RWPE1 (cell line): ENCODE measurements at regions of chr7 and their contacts with region 1.

Region 1: GRCh38 chr7:27774717-27775328 is 34.9 kb downstream of the TAX1BP1 start:
- DNase-seq: peak; percentile 19
- H3K27ac ChIP-seq: no peak overlapping the region
- CTCF ChIP-seq: peak; percentile 94

Region 2: GRCh38 chr7:27196287-27196767 is 578.5 kb before region 1 on chr7:
- CTCF ChIA-PET with region 1: interaction called, 10 read pairs
- POLR2A ChIA-PET with region 1: no interaction called
- DNase-seq: no peak
- H3K27ac ChIP-seq: no peak overlapping the region
- CTCF ChIP-seq: peak; percentile 85

Region 3: GRCh38 chr7:27739909-27740448 is 34.8 kb before region 1 on chr7 and contains the start of gene TAX1BP1:
- CTCF ChIA-PET with region 1: interaction called, 16 read pairs
- POLR2A ChIA-PET with region 1: interaction called, 4 read pairs
- DNase-seq: peak; percentile 95
- H3K27ac ChIP-seq: peak within 1 kb of the TSS; percentile 93
- CTCF ChIP-seq: no peak

Region 4: GRCh38 chr7:27745064-27745583 is 29.7 kb before region 1 on chr7:
- CTCF ChIA-PET with region 1: interaction called, 16 read pairs
- POLR2A ChIA-PET with region 1: no interaction called
- DNase-seq: peak; percentile 69
- H3K27ac ChIP-seq: no peak overlapping the region
- CTCF ChIP-seq: peak; percentile 94